Endothelial cell of umbilical vein (primary cell): ENCODE measurements at regions of chr11 and their contacts with region 1.

Region 1: DNA sequence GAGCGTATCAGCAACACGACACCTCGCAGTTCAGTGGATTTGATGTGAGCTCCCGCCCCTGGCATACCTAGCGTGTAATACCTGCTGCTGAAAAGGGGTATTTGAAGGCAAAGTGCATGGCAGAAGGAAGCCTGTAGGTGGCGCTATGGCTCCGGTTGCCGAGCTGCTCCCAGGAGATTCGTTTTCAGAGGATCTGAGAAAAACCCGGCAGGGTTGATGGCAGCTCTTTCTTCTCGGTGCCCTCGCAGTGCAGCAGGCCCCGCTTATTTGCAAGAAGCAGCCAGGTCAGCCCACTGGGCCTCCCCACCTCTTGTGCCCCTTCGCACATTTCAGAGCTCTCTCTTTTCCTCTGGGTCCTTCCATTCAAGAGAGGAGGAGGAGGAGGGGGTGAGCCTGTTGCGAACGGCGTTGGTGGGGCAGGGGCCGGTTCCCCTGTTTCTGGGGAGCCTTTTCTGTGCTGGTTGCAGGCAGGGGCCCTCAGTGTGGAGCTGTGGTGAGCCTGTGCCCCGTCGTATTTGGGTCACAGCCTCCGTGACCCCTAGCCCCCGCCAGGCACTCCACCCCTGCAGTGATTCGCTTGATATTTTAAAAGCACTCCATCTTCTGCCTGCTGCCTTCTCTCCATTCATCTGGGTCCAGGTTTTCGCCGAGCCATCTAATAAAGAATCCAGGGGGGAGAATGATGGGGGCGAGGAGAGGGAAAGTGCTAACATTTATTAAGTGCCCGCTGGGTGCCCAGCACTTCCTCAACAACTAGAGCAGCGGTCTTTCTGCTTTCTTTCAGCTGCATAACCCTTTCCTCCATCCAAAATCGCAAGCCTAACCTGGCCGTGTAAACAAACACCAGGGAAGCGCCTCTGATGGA is 85.3 kb upstream of the SYT13 start:
- DNase-seq: peak; percentile 63
- H3K4me3 ChIP-seq: no peak overlapping the region
- H3K27ac ChIP-seq: no peak overlapping the region
- H3K4me1 ChIP-seq: no peaks in the 10 kb centered on the region
- H3K27me3 ChIP-seq: peaks cover 6 to 7% of the 10 kb centered on the region in 2 experiments
- CTCF ChIP-seq: peak; percentile 94 to 96
- POLR2A ChIP-seq: no peak

Region 2: DNA sequence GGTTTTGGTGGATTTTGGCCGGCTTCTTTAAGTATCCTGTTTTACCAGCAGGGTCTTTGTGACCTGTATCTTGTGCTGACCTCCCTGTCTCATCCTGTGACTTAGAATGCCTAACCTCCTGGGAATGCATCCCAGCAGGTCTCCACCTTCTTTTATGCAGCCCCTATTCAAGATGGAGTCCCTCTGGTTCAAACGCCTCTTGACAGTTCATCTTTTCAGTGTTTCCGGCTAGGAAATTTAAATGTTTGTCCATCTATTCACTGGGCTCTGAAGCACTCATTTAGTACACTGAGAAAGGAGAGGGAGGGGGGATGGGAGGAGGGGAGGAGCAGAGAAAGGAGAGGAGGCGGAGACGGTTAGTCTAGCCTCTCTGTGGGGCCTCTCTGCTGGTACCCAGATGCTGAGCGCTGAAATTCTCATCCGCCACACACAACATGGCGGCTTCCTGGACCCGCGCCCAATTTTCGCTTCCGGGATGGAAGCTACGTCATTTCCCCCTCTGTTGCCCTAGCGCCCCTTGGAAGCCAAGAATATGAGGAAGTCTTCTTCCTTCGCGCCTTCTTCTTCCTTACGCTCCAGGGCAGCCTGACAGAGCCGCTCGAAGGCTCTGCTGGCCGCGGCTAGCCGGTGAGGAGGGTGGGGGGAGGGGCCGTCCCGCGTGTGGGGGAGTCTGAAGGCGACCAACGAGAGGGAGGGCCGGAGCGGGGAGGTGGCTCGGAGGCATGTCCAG is 16.3 kb before region 1 on chr11:
- CTCF ChIA-PET with region 1: interaction called, 19 read pairs
- POLR2A ChIA-PET with region 1: no interaction called
- dilution Hi-C with region 1: no loop called
- intact Hi-C with region 1: no loop called
- DNase-seq: peak; percentile 47
- H3K4me3 ChIP-seq: peak overlapping the region in 2 of 3 experiments; percentile 18 to 47
- H3K27ac ChIP-seq: no peak overlapping the region
- H3K4me1 ChIP-seq: no peaks in the 10 kb centered on the region
- H3K27me3 ChIP-seq: peaks cover 4 to 28% of the 10 kb centered on the region in 2 experiments
- CTCF ChIP-seq: no peak
- POLR2A ChIP-seq: no peak

Region 3: DNA sequence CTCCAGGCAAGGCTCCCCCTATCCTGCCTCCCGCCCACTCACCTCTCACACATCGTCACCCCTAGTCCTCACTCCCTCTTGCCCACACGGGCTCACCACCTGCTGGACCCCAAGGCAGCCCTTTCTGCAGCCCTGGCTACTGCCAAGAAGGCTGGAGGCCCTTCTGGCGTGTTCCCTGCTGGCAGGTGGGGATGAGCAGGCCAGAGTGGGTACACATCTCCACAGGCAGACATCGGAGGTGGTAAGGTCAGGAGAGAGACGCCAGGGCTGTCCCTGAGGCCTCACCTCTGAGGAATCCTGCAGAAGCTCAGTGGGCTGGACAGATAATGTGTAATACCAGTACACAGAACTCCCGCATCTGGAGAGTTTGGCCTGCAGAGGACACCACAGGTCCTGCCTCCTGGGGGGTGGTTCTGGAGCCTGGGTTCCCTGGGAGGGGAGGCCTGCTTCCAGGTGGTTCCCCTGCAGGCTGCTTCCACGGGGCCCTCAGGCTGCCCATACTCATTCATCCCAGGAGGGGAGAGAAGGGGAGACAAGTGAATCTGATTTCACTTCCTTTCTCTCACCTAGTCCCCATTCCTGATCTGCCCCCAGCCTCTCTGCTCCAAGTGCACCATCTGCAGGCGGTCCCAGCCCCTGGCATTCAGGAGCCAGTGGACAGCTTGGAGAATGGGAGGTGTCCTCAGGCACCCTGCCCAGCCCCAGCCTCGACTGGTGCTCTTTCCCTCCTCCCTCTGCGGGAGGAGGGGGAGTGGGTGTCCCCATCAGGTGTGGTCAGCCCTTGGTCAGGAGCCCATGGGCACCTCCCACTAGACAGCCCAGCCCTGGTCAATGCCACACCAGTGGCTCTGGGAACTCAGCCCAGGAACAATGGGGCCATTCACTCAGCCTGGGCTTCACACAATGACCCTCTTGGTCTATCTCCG is 300.0 kb after region 1 on chr11:
- CTCF ChIA-PET with region 1: interaction called, 10 read pairs
- POLR2A ChIA-PET with region 1: no interaction called
- dilution Hi-C with region 1: no loop called
- intact Hi-C with region 1: no loop called
- DNase-seq: no peak
- H3K4me3 ChIP-seq: no peak overlapping the region
- H3K27ac ChIP-seq: no peak overlapping the region
- H3K4me1 ChIP-seq: no peaks in the 10 kb centered on the region
- H3K27me3 ChIP-seq: peaks cover 0 to 4% of the 10 kb centered on the region in 2 experiments
- CTCF ChIP-seq: peak in 1 of 2 donors; percentile 19
- POLR2A ChIP-seq: no peak